IMR-90 (cell line): ENCODE measurements at regions of chr9 and their contacts with region 1.

Region 1: GRCh38 chr9:83733739-83734138 is 26.0 kb upstream of the UBQLN1 start:
- DNase-seq: no peak
- ATAC-seq: no peak
- H3K4me3 ChIP-seq: no peak overlapping the region
- H3K27ac ChIP-seq: no peak overlapping the region
- H3K4me1 ChIP-seq: no peaks in the 10 kb centered on the region
- H3K27me3 ChIP-seq: no peaks in the 10 kb centered on the region; the same call in 1 of the 2 replicates
- CTCF ChIP-seq: no peak
- POLR2A ChIP-seq: no peak
- RAD21 ChIP-seq: no peak

Region 2: DNA sequence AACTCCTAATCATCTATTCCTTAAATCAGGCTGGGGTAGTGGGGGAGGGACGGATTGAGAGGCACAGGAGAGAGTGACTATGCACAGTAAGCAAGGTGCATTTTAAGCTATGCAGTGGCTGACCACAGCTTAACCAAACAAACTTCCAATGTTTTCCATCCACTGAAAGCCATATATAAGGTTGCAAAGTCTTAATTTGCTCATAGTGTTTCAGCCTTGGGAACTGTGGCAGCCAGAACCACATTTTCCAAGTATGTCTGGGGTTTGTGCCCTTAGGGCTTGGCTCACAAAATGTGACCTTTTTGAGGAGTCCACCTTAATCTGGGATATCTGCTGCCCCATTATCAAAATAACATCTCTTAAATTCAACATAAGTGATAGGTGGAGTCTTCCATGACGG is 11.1 kb before region 1 on chr9:
- CTCF ChIA-PET with region 1: no interaction called
- POLR2A ChIA-PET with region 1: no interaction called
- dilution Hi-C with region 1: no loop called
- in situ Hi-C with region 1: no loop called
- intact Hi-C with region 1: no loop called
- DNase-seq: no peak
- ATAC-seq: no peak
- H3K4me3 ChIP-seq: no peak overlapping the region
- H3K27ac ChIP-seq: no peak overlapping the region
- H3K4me1 ChIP-seq: no peaks in the 10 kb centered on the region
- H3K27me3 ChIP-seq: no peaks in the 10 kb centered on the region; the same call in none of the 2 replicates
- CTCF ChIP-seq: no peak
- POLR2A ChIP-seq: no peak
- RAD21 ChIP-seq: no peak

Region 3: DNA sequence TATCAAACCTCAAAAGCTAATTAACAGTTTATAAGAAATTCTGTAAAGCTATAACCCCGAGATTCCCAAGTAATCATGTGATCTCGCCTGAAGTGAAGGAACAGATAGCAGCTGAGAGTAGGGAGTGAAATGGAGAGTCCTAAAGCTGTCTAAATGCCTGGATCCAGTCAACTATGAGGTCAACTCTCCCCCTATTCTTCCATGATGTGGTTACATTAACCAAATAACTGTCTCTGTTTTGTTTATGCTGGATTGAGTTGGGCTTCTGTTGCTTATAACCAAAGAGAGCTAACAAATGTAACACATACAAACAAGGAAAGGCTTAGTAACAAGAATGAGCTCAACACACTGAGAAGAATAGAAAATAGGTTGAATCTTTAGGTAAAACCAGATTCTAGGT is 42.2 kb after region 1 on chr9:
- CTCF ChIA-PET with region 1: no interaction called
- POLR2A ChIA-PET with region 1: no interaction called
- dilution Hi-C with region 1: no loop called
- in situ Hi-C with region 1: no loop called
- intact Hi-C with region 1: loop called (anchors 5 kb)
- DNase-seq: peak; percentile 27
- ATAC-seq: peak; percentile 65; the same call in 1 of the 2 replicates
- H3K4me3 ChIP-seq: no peak overlapping the region
- H3K27ac ChIP-seq: no peak overlapping the region
- H3K4me1 ChIP-seq: no peaks in the 10 kb centered on the region
- H3K27me3 ChIP-seq: no peaks in the 10 kb centered on the region
- CTCF ChIP-seq: no peak
- POLR2A ChIP-seq: no peak
- RAD21 ChIP-seq: no peak